ENCODE measurements at regions of chr11 and their contacts with region 1.

Region 1: DNA sequence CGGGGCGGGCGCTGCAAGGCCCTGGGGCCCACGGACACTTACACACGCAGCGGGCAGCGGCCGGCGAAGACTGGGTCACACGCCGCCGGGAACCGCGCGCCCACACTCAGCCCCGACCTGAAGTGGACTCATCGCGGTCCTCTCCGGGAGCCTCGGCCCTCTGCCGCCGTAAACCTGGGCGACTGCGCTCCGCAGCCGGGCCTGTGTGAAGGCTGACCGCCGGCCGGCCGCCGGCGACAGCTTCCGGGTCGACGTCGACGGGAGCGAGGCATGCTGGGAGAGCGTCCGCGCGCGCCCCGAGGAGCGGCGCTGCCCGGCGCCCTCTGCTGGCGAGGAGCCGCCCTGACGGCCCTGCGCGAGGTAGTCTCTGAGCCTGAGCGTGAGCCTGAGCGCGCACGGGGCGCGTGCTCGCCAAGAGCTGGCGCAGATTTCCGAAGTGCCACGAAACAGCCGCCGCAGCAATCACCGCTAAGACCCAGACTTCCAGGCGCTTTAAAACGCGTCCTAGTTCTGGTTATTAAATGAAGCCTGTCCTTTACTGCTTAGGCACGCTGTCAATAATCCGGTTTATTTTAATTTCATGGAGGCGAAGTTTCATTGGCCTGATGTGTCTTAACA is at the start of gene SNX19:
- DNase-seq: peak; percentile 92
- H3K4me3 ChIP-seq: peak within 1 kb of the TSS; percentile 34 to 87 (median 51)
- H3K27ac ChIP-seq: peak within 1 kb of the TSS; percentile 76
- H3K4me1 ChIP-seq: peaks cover 12% of the 10 kb centered on the region
- H3K27me3 ChIP-seq: peaks cover 3 to 4% of the 10 kb centered on the region in 2 experiments
- CTCF ChIP-seq: peak; percentile 91 to 97
- POLR2A ChIP-seq: peak; percentile 89
- total RNA-seq, gene SNX19: 44.3 and 49.8 TPM in 2 replicates

Region 2: DNA sequence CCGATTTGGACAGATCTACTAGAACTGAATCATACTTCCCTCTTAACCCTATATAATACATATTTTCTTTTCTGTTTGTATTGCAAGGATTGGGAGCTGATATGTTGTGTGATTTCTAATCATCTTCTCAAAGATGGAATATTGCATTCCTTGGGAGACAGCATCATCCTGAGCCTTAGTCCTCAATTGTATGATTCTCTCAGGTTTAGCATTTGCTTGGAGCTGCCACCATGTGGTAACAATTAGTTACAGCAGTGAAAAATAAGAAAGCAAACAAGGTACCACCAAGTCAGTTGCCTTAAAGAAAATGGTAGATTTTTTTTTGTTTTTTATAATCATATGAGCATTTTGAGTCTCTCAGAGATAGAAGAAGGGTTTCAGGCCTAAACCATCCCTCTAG is 12.0 kb before region 1 on chr11:
- CTCF ChIA-PET with region 1: interaction called, 25 read pairs
- POLR2A ChIA-PET with region 1: interaction called, 4 read pairs
- dilution Hi-C with region 1: no loop called
- intact Hi-C with region 1: loop called (anchors 1 kb)
- DNase-seq: no peak
- H3K4me3 ChIP-seq: no peak overlapping the region
- H3K27ac ChIP-seq: peak overlapping the region; percentile 10
- H3K4me1 ChIP-seq: peaks cover 38% of the 10 kb centered on the region
- H3K27me3 ChIP-seq: no peaks in the 10 kb centered on the region
- CTCF ChIP-seq: peak; percentile 17 to 27
- POLR2A ChIP-seq: no peak

Region 3: DNA sequence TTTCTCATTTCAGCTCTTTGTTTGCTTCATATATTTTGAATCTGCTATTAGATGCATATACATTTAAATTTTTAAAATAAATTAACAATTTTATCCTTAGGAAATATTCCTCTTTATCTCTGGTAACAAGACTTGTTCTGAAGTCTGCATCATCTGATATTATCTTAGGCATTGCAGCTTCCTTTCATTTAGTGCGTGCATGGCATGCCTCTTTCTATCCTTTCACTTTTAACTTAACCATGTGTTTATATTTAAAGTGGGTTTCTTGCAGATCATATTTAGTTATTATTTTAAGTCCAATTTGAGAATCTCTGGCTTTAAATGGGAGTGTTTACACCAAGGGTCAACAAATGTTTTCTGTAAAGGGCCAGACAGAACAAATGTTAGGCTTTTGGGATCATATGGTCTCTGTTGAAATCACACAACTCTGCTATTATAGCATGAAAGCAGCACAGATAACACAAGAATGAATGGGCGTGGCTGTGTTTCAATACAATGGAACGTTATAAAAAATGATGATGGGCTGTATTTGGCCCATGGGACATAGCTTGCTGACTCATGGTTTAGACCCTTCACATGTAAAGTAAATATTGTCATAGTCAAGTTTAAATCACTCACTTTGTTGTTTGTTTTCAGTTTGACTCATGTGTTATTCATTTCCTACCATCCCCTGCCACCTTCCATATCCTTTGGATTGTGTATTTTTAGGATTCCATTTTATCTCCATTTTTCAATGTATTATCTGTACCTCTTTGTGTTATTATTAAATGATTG is 83.8 kb after region 1 on chr11:
- CTCF ChIA-PET with region 1: interaction called, 3 read pairs
- POLR2A ChIA-PET with region 1: no interaction called
- dilution Hi-C with region 1: no loop called
- intact Hi-C with region 1: loop called (anchors 1 kb)
- DNase-seq: peak; percentile 80
- H3K4me3 ChIP-seq: peak overlapping the region in 1 of 3 experiments; percentile 21
- H3K27ac ChIP-seq: peak overlapping the region; percentile 69
- H3K4me1 ChIP-seq: peaks cover 24% of the 10 kb centered on the region
- H3K27me3 ChIP-seq: no peaks in the 10 kb centered on the region
- CTCF ChIP-seq: no peak
- POLR2A ChIP-seq: no peak

Region 4: GRCh38 chr11:131370090-131370751 is 453.9 kb after region 1 on chr11 and contains the start of gene NTM:
- CTCF ChIA-PET with region 1: no interaction called
- POLR2A ChIA-PET with region 1: no interaction called
- dilution Hi-C with region 1: no loop called
- intact Hi-C with region 1: no loop called
- DNase-seq: no peak
- H3K4me3 ChIP-seq: no peak within 1 kb of the TSS
- H3K27ac ChIP-seq: no peak within 1 kb of the TSS
- H3K4me1 ChIP-seq: no peaks in the 10 kb centered on the region
- H3K27me3 ChIP-seq: no peaks in the 10 kb centered on the region
- CTCF ChIP-seq: no peak
- POLR2A ChIP-seq: no peak
- total RNA-seq, gene NTM: 1.00 and 1.0 TPM in 2 replicates

Measured in endothelial cell of umbilical vein (primary cell).